ENCODE measurements at regions of chr9 and their contacts with region 1.

Region 1: DNA sequence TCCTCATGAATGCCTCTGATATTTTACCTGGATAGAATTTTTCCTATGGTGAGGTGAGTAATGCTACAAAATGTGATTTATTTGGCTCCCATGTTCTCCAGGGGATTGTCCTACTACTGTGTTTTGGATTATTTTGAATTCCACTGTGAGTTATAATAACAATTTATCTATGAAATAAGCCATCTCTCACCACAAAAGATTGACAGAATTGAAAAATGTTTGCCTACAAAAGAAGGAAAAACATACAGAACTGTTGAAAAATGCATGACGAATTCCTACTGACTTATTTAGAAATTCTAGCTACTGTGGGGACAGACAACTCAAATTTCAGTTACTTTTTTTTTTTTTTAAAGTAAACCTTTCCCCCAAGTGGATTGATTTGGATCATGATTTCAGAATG is 463.7 kb upstream of the GRIN3A start:
- DNase-seq: no peak
- H3K4me3 ChIP-seq: no peak overlapping the region
- H3K4me3 Mint-ChIP-seq: no peak overlapping the region
- H3K27ac ChIP-seq: no peak overlapping the region
- H3K27ac Mint-ChIP-seq: no peak overlapping the region
- H3K4me1 ChIP-seq: no peaks in the 10 kb centered on the region
- H3K4me1 Mint-ChIP-seq: no peaks in the 10 kb centered on the region
- H3K27me3 ChIP-seq: no peaks in the 10 kb centered on the region
- H3K27me3 Mint-ChIP-seq: no peaks in the 10 kb centered on the region

Region 2: GRCh38 chr9:102164247-102164646 is 37.9 kb before region 1 on chr9:
- CTCF ChIA-PET with region 1: no interaction called
- POLR2A ChIA-PET with region 1: no interaction called
- intact Hi-C with region 1: loop called (anchors 2 kb)
- DNase-seq: no peak
- H3K4me3 ChIP-seq: no peak overlapping the region
- H3K4me3 Mint-ChIP-seq: no peak overlapping the region
- H3K27ac ChIP-seq: no peak overlapping the region
- H3K27ac Mint-ChIP-seq: no peak overlapping the region
- H3K4me1 ChIP-seq: no peaks in the 10 kb centered on the region
- H3K4me1 Mint-ChIP-seq: no peaks in the 10 kb centered on the region
- H3K27me3 ChIP-seq: no peaks in the 10 kb centered on the region
- H3K27me3 Mint-ChIP-seq: no peaks in the 10 kb centered on the region

Measured in CD4-positive, alpha-beta memory T cell (primary cell).